Panc1 (cell line): ENCODE measurements at regions of chr4 and their contacts with region 1.

Region 1: GRCh38 chr4:119041951-119042560 is 93.6 kb upstream of the MYOZ2 start:
- DNase-seq: peak; percentile 39
- ATAC-seq: peak; percentile 88
- H3K4me3 ChIP-seq: no peak overlapping the region
- H3K27ac ChIP-seq: no peak overlapping the region
- H3K4me1 ChIP-seq: no peaks in the 10 kb centered on the region
- H3K27me3 ChIP-seq: no peaks in the 10 kb centered on the region
- CTCF ChIP-seq: peak; percentile 76

Region 2: DNA sequence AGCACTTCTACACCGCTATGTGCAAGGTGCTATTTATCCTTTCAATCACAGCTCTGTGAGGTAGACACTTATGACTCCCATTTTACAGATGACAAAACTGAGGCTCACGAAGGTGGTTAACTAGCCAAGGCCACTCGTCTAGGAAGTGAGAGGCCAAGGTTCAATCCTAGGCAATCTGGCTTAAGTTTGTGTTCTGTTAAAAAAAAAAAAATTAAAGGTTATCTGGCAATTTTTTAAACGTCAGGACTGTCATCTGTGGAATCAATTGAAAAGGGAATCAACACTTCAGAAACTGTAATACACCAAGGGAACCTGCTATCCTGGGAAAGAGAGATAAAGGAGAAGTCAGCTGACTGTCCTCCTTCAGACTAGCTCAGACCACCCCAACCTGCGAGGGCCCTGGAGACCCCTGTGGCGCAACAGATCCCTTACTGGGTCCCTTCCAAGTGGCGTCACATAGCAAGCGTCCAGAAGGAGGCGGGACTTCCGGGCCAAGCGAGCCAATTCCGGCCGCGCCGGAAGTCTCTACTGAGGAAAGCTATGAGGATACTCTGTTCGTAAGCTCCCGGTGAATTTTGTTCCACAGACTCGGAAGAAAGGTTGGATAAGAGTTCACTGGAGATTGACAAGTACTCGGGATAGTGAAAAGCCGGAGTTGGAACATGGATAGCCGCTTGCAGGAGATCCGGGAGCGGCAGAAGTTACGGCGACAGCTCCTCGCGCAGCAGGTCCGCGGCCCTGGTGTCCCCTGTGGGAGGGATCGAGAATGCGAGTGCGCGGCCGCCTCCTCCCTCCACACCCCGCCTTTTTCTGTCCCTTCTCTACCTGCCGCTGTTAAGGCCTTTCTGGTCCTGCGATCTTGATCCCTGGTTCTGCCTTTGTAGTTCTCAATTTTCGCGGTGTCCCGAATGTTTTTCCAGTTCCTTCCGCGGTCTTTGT is 356.9 kb before region 1 on chr4 and contains the start of gene METTL14:
- CTCF ChIA-PET with region 1: interaction called, 10 read pairs
- POLR2A ChIA-PET with region 1: no interaction called
- in situ Hi-C with region 1: no loop called
- intact Hi-C with region 1: no loop called
- DNase-seq: peak; percentile 77
- ATAC-seq: peak; percentile 99
- H3K4me3 ChIP-seq: peak within 1 kb of the TSS; percentile 85 to 98
- H3K27ac ChIP-seq: peak within 1 kb of the TSS; percentile 78
- H3K4me1 ChIP-seq: peaks cover 7% of the 10 kb centered on the region; the same call in 1 of the 2 replicates
- H3K27me3 ChIP-seq: no peaks in the 10 kb centered on the region
- CTCF ChIP-seq: no peak
- total RNA-seq, gene METTL14: 22.4 TPM

Region 3: DNA sequence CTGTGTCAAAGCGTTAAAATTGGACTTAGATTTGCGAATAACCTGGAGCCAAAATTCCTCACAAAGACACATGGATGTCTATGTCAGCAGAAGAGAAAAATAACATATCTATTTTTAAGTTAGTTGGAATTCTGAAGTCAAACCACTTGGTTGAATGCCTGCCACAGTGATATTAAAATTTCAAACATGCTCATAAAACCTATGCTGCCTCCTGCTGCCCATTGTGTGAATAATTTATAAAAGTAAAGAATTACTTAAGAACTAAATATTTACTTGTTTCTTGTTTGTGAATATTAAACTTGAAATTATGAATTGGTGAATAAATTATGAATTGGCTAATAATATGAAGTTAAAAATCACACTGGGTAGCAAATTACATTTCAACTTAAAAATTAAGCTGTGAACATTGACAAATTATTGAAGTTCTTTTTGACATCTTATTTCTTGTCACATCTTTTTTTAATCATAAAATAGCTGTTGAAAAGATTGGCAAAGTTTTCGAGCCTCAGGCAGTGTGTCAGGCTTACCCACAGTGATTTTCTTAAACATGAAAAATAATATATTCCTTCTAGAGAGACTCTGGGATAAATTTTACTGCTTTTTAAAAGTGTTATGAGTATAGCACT is 244.4 kb after region 1 on chr4:
- CTCF ChIA-PET with region 1: no interaction called
- POLR2A ChIA-PET with region 1: no interaction called
- in situ Hi-C with region 1: no loop called
- intact Hi-C with region 1: loop called (anchors 1 kb)
- DNase-seq: no peak
- ATAC-seq: no peak
- H3K4me3 ChIP-seq: no peak overlapping the region
- H3K27ac ChIP-seq: no peak overlapping the region
- H3K4me1 ChIP-seq: no peaks in the 10 kb centered on the region
- H3K27me3 ChIP-seq: no peaks in the 10 kb centered on the region
- CTCF ChIP-seq: peak; percentile 64; the same call in 1 of the 2 replicates